ENCODE measurements at regions of chr18 and their contacts with region 1.

Region 1: DNA sequence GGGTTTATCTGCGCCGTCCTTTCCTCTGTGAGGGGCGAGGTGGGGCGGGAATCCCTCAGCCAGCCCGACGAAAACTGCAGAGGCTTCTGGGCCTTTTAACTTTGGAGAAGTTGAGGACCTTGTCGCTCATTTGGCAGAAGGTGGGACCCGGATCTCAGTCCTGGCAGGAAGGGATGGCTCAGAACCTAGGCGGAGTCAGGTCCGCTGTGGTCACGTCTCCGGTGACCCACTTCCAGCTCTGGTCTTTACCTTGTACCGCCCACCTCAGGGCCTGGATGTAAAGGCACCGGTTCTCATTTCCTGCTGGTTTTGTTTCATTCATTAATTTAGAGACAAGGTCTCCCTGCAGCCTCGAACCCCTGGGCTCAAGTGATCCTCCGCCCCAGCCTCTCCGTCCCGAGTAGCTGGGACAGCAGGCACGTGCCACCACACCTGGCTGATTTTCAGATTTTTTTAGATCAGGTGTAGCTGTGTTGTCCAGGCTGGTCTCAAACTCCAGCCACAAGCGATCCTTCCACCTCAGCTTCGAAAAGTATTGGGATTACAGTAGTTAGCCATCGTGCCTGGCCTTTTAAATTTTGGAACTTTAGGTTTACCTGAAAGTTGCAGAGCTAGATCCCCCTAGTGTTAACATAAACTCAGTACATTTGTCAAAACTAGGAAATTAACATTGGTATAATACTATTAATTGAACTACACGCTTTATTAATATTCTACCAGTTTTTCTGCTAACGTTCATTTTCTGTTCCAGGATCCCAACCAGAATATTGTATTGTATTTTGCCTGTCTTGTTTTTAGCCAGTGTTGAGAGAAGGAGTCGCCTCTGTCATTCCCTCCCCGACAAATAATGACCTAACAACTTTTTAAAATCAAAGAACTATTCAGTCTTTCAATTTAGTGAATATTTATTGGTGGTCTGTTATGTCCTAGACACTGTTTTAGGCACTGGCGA is 852 bp downstream of the POLI start:
- DNase-seq: no peak
- ATAC-seq: peak; percentile 67
- H3K4me3 ChIP-seq: peak overlapping the region; percentile 78
- H3K27ac ChIP-seq: peak overlapping the region; percentile 87
- H3K4me1 ChIP-seq: peaks cover 18% of the 10 kb centered on the region
- H3K27me3 ChIP-seq: no peaks in the 10 kb centered on the region
- CTCF ChIP-seq: peak; percentile 44 to 59 (median 54); a peak in 5 of 6 replicates
- EP300 ChIP-seq: no peak
- POLR2A ChIP-seq: no peak
- RAD21 ChIP-seq: peak; percentile 65

Region 2: DNA sequence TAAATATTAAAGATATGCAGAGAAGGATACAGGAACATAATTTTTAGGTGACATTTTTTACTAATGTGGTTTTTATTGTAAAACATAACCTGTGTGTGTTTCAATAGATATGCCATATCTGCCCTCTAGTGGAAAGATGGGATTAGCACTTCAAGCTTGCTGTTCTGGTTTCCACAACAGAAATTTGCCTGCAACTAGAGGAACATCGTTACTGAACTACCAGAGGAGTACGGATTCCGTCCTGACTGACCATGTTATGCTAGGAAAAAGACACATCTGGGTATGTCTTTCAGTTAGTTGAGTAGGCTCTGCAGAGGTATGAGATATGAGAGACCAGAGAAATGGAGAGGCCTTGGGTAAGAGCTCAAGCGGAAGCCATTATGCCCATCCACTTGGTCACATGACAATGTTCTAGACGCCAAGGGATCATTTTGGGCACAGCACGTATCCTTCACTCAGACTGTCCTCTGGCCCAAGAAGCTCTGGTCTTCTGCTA is 150.6 kb before region 1 on chr18:
- CTCF ChIA-PET with region 1: interaction called, 12 read pairs
- POLR2A ChIA-PET with region 1: no interaction called
- RAD21 ChIA-PET with region 1: interaction called, 23 read pairs
- SMC1A ChIA-PET with region 1: interaction called, 11 read pairs
- in situ Hi-C with region 1: no loop called
- intact Hi-C with region 1: no loop called
- DNase-seq: peak; percentile 59
- ATAC-seq: peak; percentile 96
- H3K4me3 ChIP-seq: no peak overlapping the region
- H3K27ac ChIP-seq: no peak overlapping the region
- H3K4me1 ChIP-seq: no peaks in the 10 kb centered on the region
- H3K27me3 ChIP-seq: no peaks in the 10 kb centered on the region
- CTCF ChIP-seq: peak; percentile 74 to 85 (median 79)
- EP300 ChIP-seq: no peak
- POLR2A ChIP-seq: no peak
- RAD21 ChIP-seq: peak; percentile 84

Region 3: GRCh38 chr18:54173980-54174630 is 96.1 kb before region 1 on chr18:
- CTCF ChIA-PET with region 1: interaction called, 14 read pairs
- POLR2A ChIA-PET with region 1: interaction called, 3 read pairs
- RAD21 ChIA-PET with region 1: interaction called, 8 read pairs
- SMC1A ChIA-PET with region 1: interaction called, 8 read pairs
- in situ Hi-C with region 1: no loop called
- intact Hi-C with region 1: no loop called
- DNase-seq: no peak
- ATAC-seq: peak; percentile 75
- H3K4me3 ChIP-seq: no peak overlapping the region
- H3K27ac ChIP-seq: peak overlapping the region; percentile 13; the same call in 1 of the 2 replicates
- H3K4me1 ChIP-seq: peaks cover 16% of the 10 kb centered on the region; the same call in 1 of the 2 replicates
- H3K27me3 ChIP-seq: no peaks in the 10 kb centered on the region
- CTCF ChIP-seq: no peak
- EP300 ChIP-seq: no peak
- POLR2A ChIP-seq: no peak
- RAD21 ChIP-seq: peak; percentile 19; the same call in 1 of the 2 replicates

Region 4: GRCh38 chr18:54217624-54218023 is 52.5 kb before region 1 on chr18:
- CTCF ChIA-PET with region 1: interaction called, 97 read pairs
- POLR2A ChIA-PET with region 1: interaction called, 17 read pairs
- RAD21 ChIA-PET with region 1: interaction called, 82 read pairs
- SMC1A ChIA-PET with region 1: interaction called, 219 read pairs
- in situ Hi-C with region 1: no loop called
- intact Hi-C with region 1: no loop called
- DNase-seq: no peak
- ATAC-seq: peak; percentile 35
- H3K4me3 ChIP-seq: peak overlapping the region; percentile 77
- H3K27ac ChIP-seq: peak overlapping the region; percentile 88
- H3K4me1 ChIP-seq: peaks cover 20% of the 10 kb centered on the region
- H3K27me3 ChIP-seq: no peaks in the 10 kb centered on the region
- CTCF ChIP-seq: no peak
- EP300 ChIP-seq: no peak
- POLR2A ChIP-seq: no peak
- RAD21 ChIP-seq: no peak

Region 5: GRCh38 chr18:54240629-54241107 is 29.5 kb before region 1 on chr18:
- CTCF ChIA-PET with region 1: interaction called, 16 read pairs
- POLR2A ChIA-PET with region 1: interaction called, 3 read pairs
- RAD21 ChIA-PET with region 1: interaction called, 5 read pairs
- SMC1A ChIA-PET with region 1: interaction called, 11 read pairs
- in situ Hi-C with region 1: no loop called
- intact Hi-C with region 1: no loop called
- DNase-seq: no peak
- ATAC-seq: no peak
- H3K4me3 ChIP-seq: no peak overlapping the region
- H3K27ac ChIP-seq: no peak overlapping the region
- H3K4me1 ChIP-seq: no peaks in the 10 kb centered on the region
- H3K27me3 ChIP-seq: no peaks in the 10 kb centered on the region; a peak in 1 of 4 replicates
- CTCF ChIP-seq: no peak
- EP300 ChIP-seq: no peak
- POLR2A ChIP-seq: no peak
- RAD21 ChIP-seq: no peak

Region 6: GRCh38 chr18:54284981-54285785 is 15.0 kb after region 1 on chr18:
- CTCF ChIA-PET with region 1: interaction called, 38 read pairs
- POLR2A ChIA-PET with region 1: interaction called, 16 read pairs
- RAD21 ChIA-PET with region 1: interaction called, 36 read pairs
- SMC1A ChIA-PET with region 1: interaction called, 54 read pairs
- in situ Hi-C with region 1: no loop called
- intact Hi-C with region 1: loop called (anchors 2 kb)
- DNase-seq: peak; percentile 97
- ATAC-seq: peak; percentile 99
- H3K4me3 ChIP-seq: no peak overlapping the region
- H3K27ac ChIP-seq: peak overlapping the region; percentile 73
- H3K4me1 ChIP-seq: peaks cover 28% of the 10 kb centered on the region
- H3K27me3 ChIP-seq: no peaks in the 10 kb centered on the region
- CTCF ChIP-seq: no peak
- EP300 ChIP-seq: peak; percentile 94 to 97
- POLR2A ChIP-seq: peak; percentile 72
- RAD21 ChIP-seq: 0 out of 2 replicates have a peak, but pooled peaks have one; percentile 6

Region 7: DNA sequence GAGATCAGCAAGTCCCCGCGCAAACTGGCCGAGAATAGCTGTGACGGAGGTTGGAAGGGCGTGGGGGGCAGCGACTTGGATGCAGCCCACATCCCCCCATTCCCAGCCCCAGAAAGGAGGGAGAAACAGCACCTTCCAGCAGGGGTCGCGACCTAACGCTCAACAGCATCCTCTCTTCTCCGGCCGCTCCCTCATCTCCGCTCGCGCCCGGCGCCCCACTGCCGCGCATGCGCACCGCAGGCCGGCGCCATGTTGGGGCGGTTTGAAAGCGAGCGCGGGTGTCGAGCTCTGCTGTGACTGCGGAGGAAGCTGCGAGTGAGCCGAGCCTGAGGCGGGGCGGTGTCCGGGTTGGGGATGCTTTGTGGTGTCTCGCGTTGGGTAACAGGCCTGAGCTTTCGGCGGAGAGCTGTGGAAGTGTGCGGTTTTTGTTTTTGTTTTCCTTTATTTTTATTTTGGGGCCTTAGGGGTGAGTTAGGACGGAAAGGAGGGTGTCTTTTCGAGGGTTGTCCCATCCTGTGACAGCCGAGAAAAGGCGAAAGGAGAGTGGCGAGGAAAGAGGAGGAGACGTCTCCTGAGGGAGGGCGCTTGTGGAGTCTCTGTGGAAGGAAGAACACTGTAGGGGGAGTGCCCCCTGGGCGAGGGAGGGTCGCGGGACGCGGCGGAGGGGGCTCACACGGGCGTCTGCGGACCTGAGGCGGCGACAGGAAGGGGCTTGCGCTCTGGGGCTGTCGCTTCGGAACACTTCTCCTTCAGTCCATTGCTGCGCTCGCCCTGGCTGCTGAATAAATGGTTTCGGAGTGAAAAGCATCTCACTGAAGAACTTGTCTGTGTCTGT is 87.7 kb after region 1 on chr18 and contains the starts of genes C18orf54 and STARD6:
- CTCF ChIA-PET with region 1: interaction called, 13 read pairs
- POLR2A ChIA-PET with region 1: no interaction called
- RAD21 ChIA-PET with region 1: interaction called, 4 read pairs
- SMC1A ChIA-PET with region 1: interaction called, 5 read pairs
- in situ Hi-C with region 1: no loop called
- intact Hi-C with region 1: no loop called
- DNase-seq: peak; percentile 76
- ATAC-seq: peak; percentile 96
- H3K4me3 ChIP-seq: peak within 1 kb of the TSS; percentile 89
- H3K27ac ChIP-seq: peak within 1 kb of the TSS; percentile 84
- H3K4me1 ChIP-seq: peaks cover 3% of the 10 kb centered on the region
- H3K27me3 ChIP-seq: no peaks in the 10 kb centered on the region
- CTCF ChIP-seq: peak; percentile 63 to 70 (median 65)
- EP300 ChIP-seq: no peak
- POLR2A ChIP-seq: peak; percentile 96
- RAD21 ChIP-seq: 0 out of 2 replicates have a peak, but pooled peaks have one; percentile 20
- polyA plus RNA-seq, gene C18orf54: 1.2 to 1.5 TPM
- polyA plus RNA-seq, gene STARD6: 0.35 to 0.45 TPM

Region 8: DNA sequence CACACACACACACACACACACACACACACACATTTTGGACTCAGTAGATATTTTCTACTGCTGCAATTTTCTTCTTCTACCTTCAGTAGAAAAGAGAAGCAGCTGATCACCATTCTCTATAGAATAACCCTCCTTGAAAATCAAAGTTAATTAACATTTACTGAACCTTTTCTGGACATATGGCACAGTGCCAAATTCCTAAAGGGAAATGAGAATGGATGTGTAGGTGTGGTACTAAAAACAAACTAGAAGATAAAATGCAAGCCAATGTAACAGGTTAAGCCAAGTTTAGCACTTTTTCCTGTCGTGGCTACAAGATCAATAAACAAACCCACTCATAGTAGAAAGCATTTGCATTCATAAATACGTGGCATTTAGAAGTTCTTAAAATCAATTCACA is 1941.3 kb after region 1 on chr18:
- CTCF ChIA-PET with region 1: no interaction called
- POLR2A ChIA-PET with region 1: no interaction called
- RAD21 ChIA-PET with region 1: no interaction called
- SMC1A ChIA-PET with region 1: no interaction called
- in situ Hi-C with region 1: no loop called
- intact Hi-C with region 1: no loop called
- DNase-seq: no peak
- ATAC-seq: no peak
- H3K4me3 ChIP-seq: no peak overlapping the region
- H3K27ac ChIP-seq: no peak overlapping the region
- H3K4me1 ChIP-seq: no peaks in the 10 kb centered on the region
- H3K27me3 ChIP-seq: no peaks in the 10 kb centered on the region
- CTCF ChIP-seq: no peak
- EP300 ChIP-seq: no peak
- POLR2A ChIP-seq: no peak
- RAD21 ChIP-seq: no peak